H1 (cell line): ENCODE measurements at regions of chr5 and their contacts with region 1.

Region 1: GRCh38 chr5:32329308-32329834 is 16.6 kb upstream of the MTMR12 start:
- DNase-seq: peak; percentile 56 to 76
- H3K4me3 ChIP-seq: no peak overlapping the region
- H3K27ac ChIP-seq: no peak overlapping the region
- H3K4me1 ChIP-seq: no peaks in the 10 kb centered on the region
- H3K27me3 ChIP-seq: no peaks in the 10 kb centered on the region
- CTCF ChIP-seq: peak; percentile 78 to 87 (median 81)
- EP300 ChIP-seq: no peak
- POLR2A ChIP-seq: no peak
- RAD21 ChIP-seq: peak; percentile 86 to 92

Region 2: DNA sequence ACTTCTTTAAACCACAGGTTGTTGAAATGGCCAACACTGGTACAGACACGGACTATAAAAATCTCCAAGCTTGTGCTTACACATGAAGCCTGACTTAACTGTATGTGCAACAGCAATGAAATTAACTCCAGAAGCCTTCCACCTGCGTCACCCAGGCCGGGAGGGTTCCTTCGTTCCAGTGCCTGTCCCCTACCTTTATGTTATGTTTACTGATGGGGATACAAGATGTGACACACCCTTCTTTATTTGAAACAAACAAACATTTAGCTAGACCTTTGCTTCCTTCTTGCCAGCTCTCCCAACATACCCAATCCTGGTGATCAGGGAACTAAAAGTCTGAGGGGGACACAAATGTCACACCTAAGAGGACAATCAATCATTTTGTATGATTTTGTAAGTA is 221.2 kb before region 1 on chr5:
- CTCF ChIA-PET with region 1: interaction called, 12 read pairs
- POLR2A ChIA-PET with region 1: no interaction called
- DNase-seq: no peak
- H3K4me3 ChIP-seq: no peak overlapping the region
- H3K27ac ChIP-seq: no peak overlapping the region
- H3K4me1 ChIP-seq: no peaks in the 10 kb centered on the region
- H3K27me3 ChIP-seq: no peaks in the 10 kb centered on the region
- CTCF ChIP-seq: no peak
- EP300 ChIP-seq: no peak
- POLR2A ChIP-seq: no peak
- RAD21 ChIP-seq: no peak

Region 3: GRCh38 chr5:32249646-32250045 is 79.7 kb before region 1 on chr5:
- CTCF ChIA-PET with region 1: interaction called, 10 read pairs
- POLR2A ChIA-PET with region 1: no interaction called
- DNase-seq: no peak
- H3K4me3 ChIP-seq: no peak overlapping the region
- H3K27ac ChIP-seq: no peak overlapping the region
- H3K4me1 ChIP-seq: no peaks in the 10 kb centered on the region
- H3K27me3 ChIP-seq: no peaks in the 10 kb centered on the region
- CTCF ChIP-seq: no peak
- EP300 ChIP-seq: no peak
- POLR2A ChIP-seq: no peak
- RAD21 ChIP-seq: no peak

Region 4: DNA sequence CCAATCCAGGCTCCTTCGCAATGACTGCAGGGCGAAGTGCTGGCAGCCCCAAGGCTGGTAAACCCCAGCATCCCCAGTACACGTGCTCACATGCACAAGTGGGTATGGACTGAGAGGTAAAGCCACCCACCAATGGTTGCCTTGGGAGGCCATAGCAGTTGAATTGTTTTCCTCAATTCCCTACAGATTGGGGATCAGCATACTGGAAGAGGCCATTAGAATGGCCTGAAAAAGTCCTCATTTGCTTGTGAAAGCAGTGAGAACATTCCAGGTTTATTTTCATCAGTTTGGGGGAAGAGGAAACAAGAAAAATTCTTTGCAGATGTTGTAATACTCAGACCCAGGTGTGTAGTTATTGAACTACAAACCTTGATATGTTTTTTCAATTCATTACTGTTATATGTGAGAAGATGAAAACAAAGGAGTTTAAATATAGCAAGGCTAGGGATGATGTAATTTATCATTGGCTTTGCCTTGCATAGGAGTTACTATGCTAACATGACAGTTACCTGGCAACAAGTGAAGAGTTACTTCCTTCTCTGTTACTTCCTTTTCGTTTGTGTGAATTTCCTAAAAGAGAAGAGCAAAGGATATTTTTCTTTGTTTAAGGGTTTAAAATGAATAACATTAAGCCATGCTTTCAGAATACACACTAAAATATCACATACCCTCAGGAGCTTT is 53.1 kb before region 1 on chr5:
- CTCF ChIA-PET with region 1: interaction called, 16 read pairs
- POLR2A ChIA-PET with region 1: no interaction called
- DNase-seq: peak in 1 of 2 experiments; percentile 43
- H3K4me3 ChIP-seq: no peak overlapping the region
- H3K27ac ChIP-seq: peak overlapping the region; percentile 78; the same call in 1 of the 2 replicates
- H3K4me1 ChIP-seq: peaks cover 9 to 29% (median 16%) of the 10 kb centered on the region in 4 experiments
- H3K27me3 ChIP-seq: no peaks in the 10 kb centered on the region
- CTCF ChIP-seq: no peak
- EP300 ChIP-seq: no peak
- POLR2A ChIP-seq: peak in 1 of 2 experiments; percentile 27; a peak in 1 of 3 replicates
- RAD21 ChIP-seq: no peak; a peak in 1 of 4 replicates

Region 5: GRCh38 chr5:32312647-32313523 is 16.5 kb before region 1 on chr5 and contains the start of gene MTMR12:
- CTCF ChIA-PET with region 1: interaction called, 57 read pairs
- POLR2A ChIA-PET with region 1: no interaction called
- DNase-seq: peak; percentile 99 to 100
- H3K4me3 ChIP-seq: peak within 1 kb of the TSS; percentile 79 to 80 (median 79)
- H3K27ac ChIP-seq: peak within 1 kb of the TSS; percentile 70; the same call in 1 of the 2 replicates
- H3K4me1 ChIP-seq: peaks cover 0 to 8% (median 4%) of the 10 kb centered on the region in 4 experiments; a peak in 5 of 7 replicates
- H3K27me3 ChIP-seq: no peaks in the 10 kb centered on the region
- CTCF ChIP-seq: no peak
- EP300 ChIP-seq: no peak
- POLR2A ChIP-seq: peak; percentile 89 to 91
- RAD21 ChIP-seq: no peak
- total RNA-seq, gene MTMR12: 49.3 and 59.3 TPM in 2 replicates

Region 6: DNA sequence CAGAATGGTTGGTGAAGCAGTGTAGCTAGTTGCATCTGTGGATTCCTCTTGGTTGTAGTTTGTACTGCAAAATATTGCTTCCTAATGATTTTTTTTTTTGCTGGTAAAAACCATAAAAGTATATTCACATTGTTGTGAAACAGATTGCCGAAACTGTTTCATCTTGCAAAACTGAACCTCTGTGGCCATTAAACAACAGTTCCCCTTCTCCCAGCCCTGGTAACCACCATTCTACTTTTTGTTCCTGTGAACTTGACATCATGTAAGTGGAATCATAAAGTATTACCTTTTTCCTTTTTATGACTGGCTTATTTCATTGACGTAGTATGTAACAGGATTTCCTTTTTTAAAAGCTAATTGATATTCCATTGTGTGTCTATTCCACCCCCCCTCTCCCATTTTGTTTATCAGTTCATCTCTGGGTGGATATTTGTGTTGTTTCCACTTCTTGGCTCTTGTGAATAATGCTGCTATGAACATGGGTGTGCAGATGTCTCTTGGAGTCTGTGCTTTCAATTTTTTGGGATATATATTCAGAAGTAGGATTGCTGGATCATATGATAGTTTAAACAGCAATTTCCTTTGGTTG is 267.8 kb after region 1 on chr5:
- CTCF ChIA-PET with region 1: no interaction called
- POLR2A ChIA-PET with region 1: no interaction called
- DNase-seq: no peak
- H3K4me3 ChIP-seq: no peak overlapping the region
- H3K27ac ChIP-seq: no peak overlapping the region
- H3K4me1 ChIP-seq: no peaks in the 10 kb centered on the region
- H3K27me3 ChIP-seq: peaks cover 0 to 1% (median 0%) of the 10 kb centered on the region in 4 experiments; a peak in 1 of 7 replicates
- CTCF ChIP-seq: no peak
- EP300 ChIP-seq: no peak
- POLR2A ChIP-seq: no peak
- RAD21 ChIP-seq: no peak